IMR-90 (cell line): ENCODE measurements at regions of chr20 and their contacts with region 1.

Region 1: DNA sequence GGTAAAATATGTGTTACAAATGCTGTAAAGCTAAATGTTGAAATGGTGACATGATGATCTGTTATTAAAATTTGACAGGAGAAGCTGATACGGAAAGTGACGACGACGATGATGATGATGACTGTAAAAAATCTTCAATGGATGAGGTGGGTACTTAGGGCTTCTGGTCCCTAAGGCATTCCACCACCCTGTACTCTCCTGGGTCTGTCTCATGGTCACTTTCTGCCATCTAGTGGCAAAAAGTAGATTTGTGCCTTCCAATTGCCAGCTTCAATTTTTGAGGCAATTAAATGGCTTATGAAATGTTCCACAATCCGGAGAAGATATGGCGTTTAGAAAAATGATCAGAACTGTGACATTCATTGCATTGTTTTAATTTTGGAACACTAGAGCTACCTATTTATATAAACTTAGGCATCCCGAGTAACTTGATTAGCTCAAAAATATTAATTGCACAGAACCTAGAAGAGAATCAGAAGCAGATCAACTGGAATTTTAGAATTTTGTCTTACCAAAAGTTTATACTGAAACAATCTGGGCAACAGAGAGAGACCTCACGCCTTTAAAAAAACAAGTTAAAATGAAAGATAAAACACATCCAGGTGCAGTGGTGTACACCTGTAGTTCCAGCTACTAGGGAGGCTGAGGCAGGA is 346.5 kb upstream of the PLCB4 start:
- DNase-seq: peak; percentile 77
- ATAC-seq: peak; percentile 86
- H3K4me3 ChIP-seq: no peak overlapping the region
- H3K27ac ChIP-seq: no peak overlapping the region
- H3K4me1 ChIP-seq: no peaks in the 10 kb centered on the region
- H3K27me3 ChIP-seq: no peaks in the 10 kb centered on the region
- CTCF ChIP-seq: peak; percentile 94
- POLR2A ChIP-seq: no peak
- RAD21 ChIP-seq: peak; percentile 98

Region 2: DNA sequence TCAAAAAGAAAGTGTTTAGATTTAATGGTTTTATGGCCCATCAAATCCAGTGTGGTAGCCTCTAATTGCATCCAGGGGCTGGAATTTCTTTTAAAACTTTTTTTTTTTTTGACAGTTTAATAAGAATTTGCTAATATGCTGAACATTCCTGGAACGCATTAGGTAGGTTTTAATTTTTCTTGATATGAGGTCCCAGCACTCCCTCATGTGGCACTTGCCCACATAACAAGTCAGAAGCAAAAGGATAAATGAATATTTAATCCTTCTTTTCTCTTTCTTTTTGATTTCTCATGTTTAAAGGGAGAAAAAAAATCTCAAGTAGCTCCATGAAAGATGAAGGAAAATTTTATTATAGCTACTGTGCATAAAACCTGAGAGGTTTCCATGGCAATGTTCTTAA is 795.6 kb before region 1 on chr20:
- CTCF ChIA-PET with region 1: interaction called, 4 read pairs
- POLR2A ChIA-PET with region 1: no interaction called
- dilution Hi-C with region 1: no loop called
- in situ Hi-C with region 1: loop called (anchors 5 kb)
- intact Hi-C with region 1: no loop called
- DNase-seq: peak; percentile 53
- ATAC-seq: peak; percentile 65
- H3K4me3 ChIP-seq: no peak overlapping the region
- H3K27ac ChIP-seq: no peak overlapping the region
- H3K4me1 ChIP-seq: no peaks in the 10 kb centered on the region
- H3K27me3 ChIP-seq: peaks cover 5% of the 10 kb centered on the region
- CTCF ChIP-seq: peak; percentile 59
- POLR2A ChIP-seq: no peak
- RAD21 ChIP-seq: peak; percentile 61

Region 3: DNA sequence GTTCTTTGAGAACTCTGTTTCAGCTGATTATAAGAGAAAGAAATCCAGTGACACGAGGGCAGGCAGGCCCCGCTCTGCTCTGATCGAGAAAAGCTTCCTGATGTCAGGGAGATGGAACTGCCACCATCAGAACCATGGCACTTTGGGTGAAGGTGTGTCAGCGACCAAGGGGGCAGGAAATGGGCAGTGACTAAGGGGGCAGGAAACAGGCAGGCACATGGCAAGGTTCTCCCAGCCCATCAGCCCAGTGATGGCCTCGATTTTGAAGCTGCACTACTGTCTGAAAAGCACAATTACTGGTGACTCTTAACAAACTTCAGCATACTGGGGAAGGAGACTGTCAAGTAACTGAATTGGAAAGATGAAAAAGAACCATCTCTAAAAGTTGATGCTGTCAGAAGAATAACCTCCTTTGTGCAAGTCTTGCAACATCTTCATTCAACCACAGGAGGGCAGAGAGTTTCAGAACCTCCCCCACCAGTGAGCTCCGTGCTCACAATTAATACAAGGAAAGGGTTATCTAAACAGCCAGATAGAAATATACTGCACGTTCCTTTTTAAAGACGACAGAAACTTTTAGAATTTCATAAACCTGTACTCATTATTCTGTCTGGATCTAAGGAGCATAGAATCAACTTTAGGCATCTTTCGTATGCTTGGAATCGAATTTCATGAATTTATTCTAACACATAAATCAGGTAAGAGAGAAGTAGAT is 741.9 kb before region 1 on chr20:
- CTCF ChIA-PET with region 1: interaction called, 6 read pairs
- POLR2A ChIA-PET with region 1: no interaction called
- dilution Hi-C with region 1: no loop called
- in situ Hi-C with region 1: no loop called
- intact Hi-C with region 1: loop called (anchors 1 kb)
- DNase-seq: peak; percentile 64
- ATAC-seq: peak; percentile 94
- H3K4me3 ChIP-seq: no peak overlapping the region
- H3K27ac ChIP-seq: no peak overlapping the region
- H3K4me1 ChIP-seq: peaks cover 3% of the 10 kb centered on the region; the same call in 1 of the 2 replicates
- H3K27me3 ChIP-seq: no peaks in the 10 kb centered on the region
- CTCF ChIP-seq: peak; percentile 57
- POLR2A ChIP-seq: no peak
- RAD21 ChIP-seq: peak; percentile 48

Region 4: GRCh38 chr20:8131598-8132483 is 590.6 kb before region 1 on chr20 and contains the start of gene PLCB1:
- CTCF ChIA-PET with region 1: interaction called, 7 read pairs
- POLR2A ChIA-PET with region 1: no interaction called
- dilution Hi-C with region 1: no loop called
- in situ Hi-C with region 1: loop called (anchors 5 kb)
- intact Hi-C with region 1: loop called (anchors 1 kb)
- DNase-seq: peak; percentile 78
- ATAC-seq: peak; percentile 89
- H3K4me3 ChIP-seq: peak within 1 kb of the TSS; percentile 69
- H3K27ac ChIP-seq: peak within 1 kb of the TSS; percentile 68
- H3K4me1 ChIP-seq: peaks cover 7% of the 10 kb centered on the region
- H3K27me3 ChIP-seq: no peaks in the 10 kb centered on the region
- CTCF ChIP-seq: peak; percentile 94
- POLR2A ChIP-seq: no peak
- RAD21 ChIP-seq: peak; percentile 93
- total RNA-seq, gene PLCB1: 16.1 and 17.5 TPM in 2 replicates

Region 5: GRCh38 chr20:8399947-8400346 is 322.5 kb before region 1 on chr20:
- CTCF ChIA-PET with region 1: interaction called, 11 read pairs
- POLR2A ChIA-PET with region 1: no interaction called
- dilution Hi-C with region 1: no loop called
- in situ Hi-C with region 1: loop called (anchors 25 kb)
- intact Hi-C with region 1: no loop called
- DNase-seq: no peak
- ATAC-seq: no peak
- H3K4me3 ChIP-seq: no peak overlapping the region
- H3K27ac ChIP-seq: no peak overlapping the region
- H3K4me1 ChIP-seq: peaks cover 3% of the 10 kb centered on the region; the same call in 1 of the 2 replicates
- H3K27me3 ChIP-seq: no peaks in the 10 kb centered on the region
- CTCF ChIP-seq: no peak
- POLR2A ChIP-seq: no peak
- RAD21 ChIP-seq: no peak

Region 6: GRCh38 chr20:8535403-8536261 is 186.8 kb before region 1 on chr20:
- CTCF ChIA-PET with region 1: interaction called, 5 read pairs
- POLR2A ChIA-PET with region 1: no interaction called
- dilution Hi-C with region 1: no loop called
- in situ Hi-C with region 1: no loop called
- intact Hi-C with region 1: loop called (anchors 5 kb)
- DNase-seq: no peak
- ATAC-seq: no peak
- H3K4me3 ChIP-seq: no peak overlapping the region
- H3K27ac ChIP-seq: no peak overlapping the region
- H3K4me1 ChIP-seq: peaks cover 2% of the 10 kb centered on the region; the same call in 1 of the 2 replicates
- H3K27me3 ChIP-seq: no peaks in the 10 kb centered on the region
- CTCF ChIP-seq: peak; percentile 47
- POLR2A ChIP-seq: no peak
- RAD21 ChIP-seq: peak; percentile 42